GM18951 (cell line): ENCODE measurements at regions of chr4 and their contacts with region 1.

Region 1: DNA sequence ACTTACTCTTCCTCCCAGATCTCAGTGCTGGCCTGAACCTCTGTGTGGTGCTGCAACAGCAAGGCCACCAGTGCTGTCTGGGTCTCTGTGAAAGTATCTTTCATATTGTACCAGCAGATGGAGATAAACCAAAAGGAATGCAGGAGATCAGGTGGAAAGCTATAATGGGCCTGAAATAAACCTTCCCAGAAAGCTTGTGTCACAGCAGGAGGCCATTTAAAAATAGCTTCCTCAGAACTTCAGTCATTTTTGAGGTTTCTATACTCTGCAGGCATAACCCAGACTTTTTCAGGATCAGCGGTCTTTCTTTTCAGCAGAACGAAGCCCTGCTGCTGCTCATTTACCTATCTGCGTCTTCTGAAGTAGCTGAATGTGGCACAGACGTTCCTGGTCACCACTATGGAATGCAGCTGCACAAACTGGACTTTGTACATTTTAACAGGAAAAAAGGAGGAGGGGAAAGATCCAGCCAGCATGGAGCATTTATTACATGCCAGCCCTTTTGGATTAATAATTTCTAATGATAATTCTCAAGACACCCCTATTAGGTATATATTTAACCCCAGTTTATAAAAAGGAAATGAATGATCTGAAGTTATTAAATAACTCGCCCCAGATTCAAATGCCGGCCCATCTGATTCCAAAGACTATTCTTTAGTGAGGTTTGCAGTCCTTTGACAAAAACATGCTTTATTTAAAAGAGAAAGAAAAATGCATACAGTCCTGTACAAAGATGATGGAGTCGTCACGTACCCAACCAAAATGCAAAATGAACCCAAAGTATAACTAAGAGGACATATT is 119.7 kb downstream of the NFKB1 start:
- POLR2A ChIP-seq: no peak

Region 2: DNA sequence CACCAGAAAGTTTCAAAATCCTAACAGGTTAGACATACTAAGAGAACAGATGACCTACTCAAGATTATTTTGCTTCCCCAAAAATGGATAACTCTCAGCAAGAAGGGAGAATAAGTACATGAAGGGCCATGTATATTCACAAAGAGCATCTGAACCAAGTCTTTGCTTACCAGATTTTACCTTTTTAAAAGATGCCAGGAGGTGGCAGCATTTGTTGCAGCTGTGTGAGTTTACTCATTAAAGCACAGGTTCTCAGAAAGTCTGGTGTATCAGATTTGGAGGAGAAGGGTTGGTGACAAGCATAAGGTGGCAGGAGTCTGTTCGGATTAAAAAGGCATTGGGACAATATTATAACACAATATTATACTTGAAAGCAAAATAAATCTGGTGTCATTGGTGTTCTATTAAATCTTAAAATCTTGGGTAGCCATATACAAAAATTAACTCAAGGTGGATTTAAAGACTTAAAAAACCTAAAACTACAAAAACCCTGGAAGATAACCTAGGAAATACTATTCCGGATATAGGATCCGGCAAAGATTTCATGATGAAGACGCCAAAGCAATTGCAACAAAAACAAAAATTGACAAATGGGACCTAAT is 171.0 kb before region 1 on chr4:
- in situ Hi-C with region 1: loop called (anchors 10 kb)
- POLR2A ChIP-seq: no peak

Region 3: DNA sequence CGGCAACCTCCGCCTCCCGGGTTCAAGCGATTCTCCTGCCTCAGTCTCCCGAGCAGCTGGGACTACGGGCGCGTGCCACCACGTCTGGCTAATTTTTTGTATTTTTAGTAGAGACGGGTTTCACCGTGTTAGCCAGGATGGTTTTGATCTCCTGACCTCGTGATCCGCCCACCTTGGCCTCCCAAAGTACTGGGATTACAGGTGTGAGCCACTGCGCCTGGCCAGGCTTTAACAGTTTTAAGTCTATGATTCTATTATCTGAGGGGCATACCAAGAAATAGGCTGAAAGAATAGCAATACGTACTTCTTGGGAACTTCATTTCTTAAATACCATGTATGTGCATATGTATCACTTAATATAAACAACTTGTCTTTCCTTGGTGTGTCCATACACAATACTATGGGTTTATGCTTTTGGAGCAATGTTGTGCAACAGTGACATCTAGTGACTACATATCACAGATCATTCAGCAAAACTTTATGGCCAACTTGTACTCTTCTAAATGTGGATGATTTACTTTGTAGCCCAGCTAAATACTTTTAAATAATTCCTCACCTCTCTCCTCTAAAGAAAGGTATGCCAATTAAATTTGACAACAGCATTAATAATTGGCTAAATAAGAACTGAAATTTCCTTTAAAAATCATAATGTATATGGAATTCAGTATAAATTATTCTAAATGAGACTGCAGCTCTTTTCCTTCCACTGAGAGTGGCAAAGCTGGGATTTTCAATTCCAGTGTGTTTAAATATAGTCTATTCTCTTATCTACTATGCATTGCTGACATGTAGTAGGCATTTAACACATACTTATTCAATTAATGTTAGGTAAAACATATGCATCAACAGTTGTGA is 388.2 kb after region 1 on chr4:
- in situ Hi-C with region 1: loop called (anchors 10 kb)
- POLR2A ChIP-seq: no peak

Region 4: GRCh38 chr4:103099691-103100392 is 478.9 kb after region 1 on chr4 and contains the start of gene BDH2:
- in situ Hi-C with region 1: loop called (anchors 10 kb)
- POLR2A ChIP-seq: no peak